H1 (cell line): ENCODE measurements at regions of chr2 and their contacts with region 1.

Region 1: GRCh38 chr2:68121873-68122679 is 35.6 kb upstream of the PNO1 start:
- DNase-seq: peak; percentile 78 to 97
- H3K4me3 ChIP-seq: no peak overlapping the region
- H3K27ac ChIP-seq: no peak overlapping the region
- H3K4me1 ChIP-seq: no peaks in the 10 kb centered on the region; a peak in 1 of 7 replicates
- H3K27me3 ChIP-seq: no peaks in the 10 kb centered on the region
- CTCF ChIP-seq: peak; percentile 85 to 96 (median 90)
- EP300 ChIP-seq: no peak
- POLR2A ChIP-seq: no peak
- RAD21 ChIP-seq: peak; percentile 91 to 92

Region 2: DNA sequence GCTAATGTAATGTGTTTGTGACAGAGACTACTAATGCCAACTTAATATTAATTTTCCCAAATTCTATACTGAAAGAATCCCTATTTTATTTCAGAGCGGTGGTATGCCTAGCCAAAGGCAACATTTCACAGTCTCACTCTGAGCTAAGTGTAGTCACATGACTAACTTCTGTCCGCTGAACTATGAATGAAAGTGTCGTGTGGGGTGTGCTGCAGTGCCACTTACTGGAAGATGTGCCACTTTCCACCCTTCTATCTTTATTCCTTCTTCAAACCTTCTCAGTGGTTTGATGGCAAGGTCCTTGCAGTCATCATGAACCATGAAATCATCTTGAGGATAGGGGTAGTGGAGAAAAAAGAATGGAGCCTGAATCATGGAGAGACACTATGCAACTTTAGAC is 12.0 kb before region 1 on chr2:
- CTCF ChIA-PET with region 1: interaction called, 17 read pairs
- POLR2A ChIA-PET with region 1: interaction called, 3 read pairs
- DNase-seq: no peak
- H3K4me3 ChIP-seq: no peak overlapping the region
- H3K27ac ChIP-seq: no peak overlapping the region
- H3K4me1 ChIP-seq: no peaks in the 10 kb centered on the region
- H3K27me3 ChIP-seq: no peaks in the 10 kb centered on the region
- CTCF ChIP-seq: no peak
- EP300 ChIP-seq: no peak
- POLR2A ChIP-seq: no peak
- RAD21 ChIP-seq: no peak

Region 3: DNA sequence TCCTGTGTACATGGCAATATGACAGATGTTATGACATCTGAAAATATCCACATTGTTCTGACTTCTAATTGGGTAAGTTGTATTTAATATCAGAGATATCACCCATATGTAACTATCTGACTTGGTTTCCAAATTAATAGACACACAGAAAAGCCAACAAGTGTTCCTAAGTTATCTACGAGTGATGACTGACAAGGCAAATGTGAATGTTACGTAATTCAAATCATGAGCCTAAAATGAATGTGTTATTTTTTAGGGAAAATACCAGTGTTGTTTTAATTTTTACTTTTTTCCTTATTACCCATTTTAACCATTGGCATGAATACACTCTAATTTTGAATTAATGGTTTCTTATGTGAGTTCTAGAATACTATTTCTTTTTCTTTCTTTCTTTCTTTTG is 19.8 kb after region 1 on chr2:
- CTCF ChIA-PET with region 1: interaction called, 12 read pairs
- POLR2A ChIA-PET with region 1: interaction called, 3 read pairs
- DNase-seq: no peak
- H3K4me3 ChIP-seq: no peak overlapping the region
- H3K27ac ChIP-seq: no peak overlapping the region
- H3K4me1 ChIP-seq: no peaks in the 10 kb centered on the region
- H3K27me3 ChIP-seq: no peaks in the 10 kb centered on the region
- CTCF ChIP-seq: no peak
- EP300 ChIP-seq: no peak
- POLR2A ChIP-seq: no peak
- RAD21 ChIP-seq: no peak

Region 4: DNA sequence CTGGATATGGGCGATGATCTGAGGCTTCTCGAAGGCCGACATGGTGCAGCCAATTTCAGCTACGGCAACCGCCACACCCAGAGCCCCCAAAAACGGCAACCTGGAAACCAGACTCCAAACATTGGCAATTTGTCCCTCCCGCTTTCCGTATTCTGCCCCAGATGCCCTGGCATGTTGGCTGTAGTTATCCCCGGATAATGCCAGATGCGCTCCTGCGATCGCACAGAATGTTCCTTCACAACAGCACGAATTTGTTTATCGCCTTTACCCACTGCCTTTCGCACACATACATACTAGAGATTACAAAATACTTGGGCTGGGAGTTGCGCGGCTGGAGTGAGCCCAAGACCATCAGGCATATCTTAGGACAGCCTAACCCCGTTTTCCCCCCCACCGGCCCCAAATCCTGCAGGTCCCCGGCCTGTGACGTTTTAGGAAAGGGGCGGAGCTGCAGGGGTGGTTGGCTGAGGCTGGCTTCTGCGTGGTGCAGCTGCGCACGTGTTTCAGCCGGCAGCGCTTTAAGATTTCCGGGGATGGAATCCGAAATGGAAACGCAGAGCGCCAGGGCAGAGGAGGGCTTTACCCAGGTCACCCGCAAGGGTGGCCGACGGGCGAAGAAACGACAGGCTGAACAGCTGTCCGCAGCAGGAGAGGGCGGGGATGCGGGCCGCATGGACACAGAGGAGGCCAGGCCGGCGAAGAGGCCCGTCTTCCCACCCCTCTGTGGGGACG is 35.5 kb after region 1 on chr2 and contains the start of gene PNO1:
- CTCF ChIA-PET with region 1: interaction called, 11 read pairs
- POLR2A ChIA-PET with region 1: interaction called, 6 read pairs
- DNase-seq: peak; percentile 86 to 96
- H3K4me3 ChIP-seq: peak within 1 kb of the TSS; percentile 91 to 99 (median 95)
- H3K27ac ChIP-seq: peak within 1 kb of the TSS; percentile 100
- H3K4me1 ChIP-seq: peaks cover 0 to 2% (median 1%) of the 10 kb centered on the region in 4 experiments; a peak in 2 of 7 replicates
- H3K27me3 ChIP-seq: no peaks in the 10 kb centered on the region
- CTCF ChIP-seq: no peak
- EP300 ChIP-seq: 0 out of 3 replicates have a peak, but pooled peaks of 1 of the 2 experiments have one; percentile 3
- POLR2A ChIP-seq: peak; percentile 70 to 75
- RAD21 ChIP-seq: no peak
- total RNA-seq, gene PNO1: 33.2 and 34.7 TPM in 2 replicates

Region 5: DNA sequence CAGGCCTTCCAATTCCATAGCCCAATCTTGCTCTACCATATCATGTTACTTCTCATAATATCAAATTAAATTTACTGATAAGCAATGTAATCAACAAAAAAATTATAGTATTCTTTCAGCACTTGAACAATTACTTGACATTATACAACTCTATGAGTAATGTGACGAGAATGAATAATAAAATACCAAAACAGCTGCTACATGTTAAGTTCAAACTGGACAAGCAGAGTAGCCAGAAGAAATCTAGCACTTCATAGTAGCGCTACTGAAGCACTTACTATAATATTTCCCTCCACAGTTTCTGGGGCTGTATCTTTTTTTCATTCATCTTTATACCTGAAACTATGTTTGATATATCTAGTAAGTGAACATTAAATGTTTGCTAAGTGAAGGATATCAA is 115.3 kb after region 1 on chr2:
- CTCF ChIA-PET with region 1: no interaction called
- POLR2A ChIA-PET with region 1: no interaction called
- DNase-seq: no peak
- H3K4me3 ChIP-seq: no peak overlapping the region
- H3K27ac ChIP-seq: no peak overlapping the region
- H3K4me1 ChIP-seq: peaks cover 0 to 17% (median 8%) of the 10 kb centered on the region in 4 experiments; a peak in 5 of 7 replicates
- H3K27me3 ChIP-seq: no peaks in the 10 kb centered on the region
- CTCF ChIP-seq: no peak
- EP300 ChIP-seq: no peak
- POLR2A ChIP-seq: no peak
- RAD21 ChIP-seq: no peak

Region 6: DNA sequence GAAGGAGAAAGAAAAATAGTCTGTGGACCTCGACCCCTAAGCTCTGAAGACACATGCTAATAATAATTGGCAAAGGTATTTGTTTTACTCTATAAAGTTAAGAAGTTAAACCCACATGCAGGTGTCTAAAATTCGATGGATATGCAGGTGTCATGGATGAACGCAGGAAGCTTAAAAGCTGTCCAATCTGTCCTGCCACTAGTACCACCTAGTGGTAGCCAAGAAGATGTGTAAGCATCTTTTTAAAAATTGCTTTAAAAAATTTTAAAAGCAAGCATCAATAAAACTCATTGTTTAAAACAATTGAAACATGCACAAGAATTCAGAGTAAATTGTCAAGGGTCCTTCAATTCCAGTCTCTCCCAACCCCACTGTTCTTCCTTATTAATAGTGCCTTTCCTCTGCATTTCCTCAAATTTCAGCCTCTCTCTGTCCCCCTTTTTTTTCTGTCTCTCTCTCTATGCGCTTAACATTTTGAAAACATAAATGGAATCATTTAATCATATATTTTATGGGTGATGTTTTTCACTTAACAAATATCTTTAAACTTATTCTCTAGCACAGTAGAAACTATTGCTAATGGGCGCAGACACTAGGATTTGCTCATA is 160.8 kb after region 1 on chr2:
- CTCF ChIA-PET with region 1: interaction called, 44 read pairs
- POLR2A ChIA-PET with region 1: no interaction called
- DNase-seq: no peak
- H3K4me3 ChIP-seq: no peak overlapping the region
- H3K27ac ChIP-seq: no peak overlapping the region
- H3K4me1 ChIP-seq: no peaks in the 10 kb centered on the region
- H3K27me3 ChIP-seq: no peaks in the 10 kb centered on the region
- CTCF ChIP-seq: peak in 2 of 3 experiments; percentile 57 to 59; a peak in 3 of 4 replicates
- EP300 ChIP-seq: no peak
- POLR2A ChIP-seq: no peak
- RAD21 ChIP-seq: peak; percentile 66

Region 7: GRCh38 chr2:68295516-68295915 is 173.4 kb after region 1 on chr2:
- CTCF ChIA-PET with region 1: interaction called, 44 read pairs
- POLR2A ChIA-PET with region 1: interaction called, 4 read pairs
- DNase-seq: no peak
- H3K4me3 ChIP-seq: no peak overlapping the region
- H3K27ac ChIP-seq: no peak overlapping the region
- H3K4me1 ChIP-seq: no peaks in the 10 kb centered on the region
- H3K27me3 ChIP-seq: no peaks in the 10 kb centered on the region
- CTCF ChIP-seq: no peak
- EP300 ChIP-seq: no peak
- POLR2A ChIP-seq: no peak
- RAD21 ChIP-seq: no peak

Region 8: GRCh38 chr2:68441179-68441993 is 319.3 kb after region 1 on chr2:
- CTCF ChIA-PET with region 1: interaction called, 10 read pairs
- POLR2A ChIA-PET with region 1: interaction called, 3 read pairs
- DNase-seq: peak; percentile 29 to 79
- H3K4me3 ChIP-seq: no peak overlapping the region
- H3K27ac ChIP-seq: no peak overlapping the region
- H3K4me1 ChIP-seq: no peaks in the 10 kb centered on the region
- H3K27me3 ChIP-seq: no peaks in the 10 kb centered on the region
- CTCF ChIP-seq: peak; percentile 46 to 98 (median 92)
- EP300 ChIP-seq: no peak
- POLR2A ChIP-seq: no peak
- RAD21 ChIP-seq: peak; percentile 91 to 97

Region 9: GRCh38 chr2:68537809-68538208 is 415.7 kb after region 1 on chr2:
- CTCF ChIA-PET with region 1: no interaction called
- POLR2A ChIA-PET with region 1: no interaction called
- DNase-seq: no peak
- H3K4me3 ChIP-seq: no peak overlapping the region
- H3K27ac ChIP-seq: no peak overlapping the region
- H3K4me1 ChIP-seq: no peaks in the 10 kb centered on the region
- H3K27me3 ChIP-seq: no peaks in the 10 kb centered on the region
- CTCF ChIP-seq: no peak
- EP300 ChIP-seq: no peak
- POLR2A ChIP-seq: no peak
- RAD21 ChIP-seq: no peak